Panc1 (cell line): ENCODE measurements at regions of chr5 and their contacts with region 1.

Region 1: DNA sequence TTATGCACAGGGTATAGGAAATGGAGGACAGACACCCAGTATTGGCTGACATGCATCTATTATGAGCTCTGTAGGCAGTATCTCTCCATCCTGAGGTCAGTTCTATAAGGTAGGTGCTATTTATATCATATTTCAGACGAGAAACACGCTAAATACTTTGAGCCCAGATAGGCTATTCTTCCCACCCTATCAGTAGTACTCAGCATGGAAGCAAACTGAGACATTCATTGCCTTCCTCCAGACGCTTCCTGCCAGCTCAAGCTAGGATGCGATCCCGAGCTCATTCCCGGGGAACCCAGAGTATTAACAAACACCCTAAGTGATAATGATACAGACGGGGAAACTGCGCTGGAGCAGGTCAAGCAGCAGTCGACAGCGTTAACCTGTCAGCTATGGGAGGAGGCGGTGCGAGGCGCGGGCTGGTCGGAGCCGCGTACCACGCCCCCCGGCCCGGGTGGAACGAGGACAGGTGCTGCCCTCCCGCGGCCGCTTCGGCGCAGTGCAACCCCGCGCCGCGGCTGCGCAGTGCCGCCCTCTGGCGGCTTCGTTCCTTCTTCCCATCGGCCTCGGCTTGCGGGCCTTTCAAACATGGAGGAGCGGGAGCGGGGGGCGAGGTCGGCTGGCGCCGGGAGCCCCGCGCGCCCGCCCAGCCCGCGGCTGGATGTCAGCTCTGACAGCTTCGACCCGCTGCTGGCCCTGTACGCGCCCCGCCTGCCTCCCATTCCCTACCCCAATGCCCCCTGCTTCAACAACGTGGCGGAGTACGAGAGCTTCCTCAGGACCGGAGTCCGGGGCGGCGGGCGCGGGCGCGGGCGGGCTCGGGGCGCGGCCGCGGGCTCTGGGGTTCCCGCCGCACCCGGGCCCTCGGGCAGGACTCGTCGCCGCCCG is at the start of gene LSM11:
- DNase-seq: peak; percentile 68
- ATAC-seq: peak; percentile 97
- H3K4me3 ChIP-seq: peak within 1 kb of the TSS; percentile 61 to 70
- H3K27ac ChIP-seq: peak within 1 kb of the TSS; percentile 35; the same call in 1 of the 2 replicates
- H3K4me1 ChIP-seq: peaks cover 9% of the 10 kb centered on the region
- H3K27me3 ChIP-seq: no peaks in the 10 kb centered on the region
- CTCF ChIP-seq: peak; percentile 100
- total RNA-seq, gene LSM11: 1.6 TPM

Region 2: DNA sequence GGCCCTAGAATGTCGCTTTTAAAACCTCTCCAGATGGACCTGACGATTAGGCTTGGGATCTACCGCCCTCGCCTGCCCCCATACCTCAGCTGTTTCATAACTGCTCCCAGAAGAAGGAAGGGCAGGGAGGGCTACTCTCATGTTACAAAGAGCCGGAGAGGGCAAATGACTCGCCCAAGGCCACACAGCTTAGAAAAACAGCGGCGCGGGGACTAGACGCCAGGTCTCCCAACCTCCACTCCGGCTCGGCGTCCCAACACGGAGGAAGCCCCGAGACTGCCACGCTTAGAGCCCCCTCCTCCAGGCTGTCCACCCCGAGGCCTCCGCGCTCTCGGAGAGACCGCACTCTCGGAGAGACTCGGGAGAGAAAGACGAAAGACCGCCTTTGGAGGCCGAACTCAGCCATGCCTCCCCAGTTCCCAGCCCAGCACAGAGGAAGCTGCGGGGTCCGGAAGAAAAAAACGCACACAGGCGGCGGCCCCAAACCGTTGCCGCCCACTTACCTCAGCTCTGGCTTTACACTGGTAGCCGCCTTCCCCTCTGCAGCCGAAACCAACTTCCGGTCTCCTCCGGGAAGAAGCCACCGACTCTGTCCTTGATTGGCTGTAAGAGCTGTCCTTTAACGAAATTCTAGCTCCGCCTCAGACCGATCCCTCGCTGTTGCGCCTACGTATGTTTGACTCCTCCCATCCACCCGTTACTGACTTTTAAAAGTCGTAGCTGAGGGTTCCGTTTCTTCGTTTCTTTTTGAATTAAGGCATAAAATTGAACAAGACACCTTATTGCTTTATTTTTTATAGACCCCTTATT is 600.9 kb before region 1 on chr5 and contains the start of gene MED7:
- CTCF ChIA-PET with region 1: no interaction called
- POLR2A ChIA-PET with region 1: no interaction called
- in situ Hi-C with region 1: no loop called
- intact Hi-C with region 1: loop called (anchors 10 kb)
- DNase-seq: peak; percentile 96
- ATAC-seq: peak; percentile 100
- H3K4me3 ChIP-seq: peak within 1 kb of the TSS; percentile 68 to 88
- H3K27ac ChIP-seq: peak within 1 kb of the TSS; percentile 81
- H3K4me1 ChIP-seq: no peaks in the 10 kb centered on the region
- H3K27me3 ChIP-seq: no peaks in the 10 kb centered on the region; the same call in 1 of the 2 replicates
- CTCF ChIP-seq: no peak
- total RNA-seq, gene MED7: 9.9 TPM

Region 3: DNA sequence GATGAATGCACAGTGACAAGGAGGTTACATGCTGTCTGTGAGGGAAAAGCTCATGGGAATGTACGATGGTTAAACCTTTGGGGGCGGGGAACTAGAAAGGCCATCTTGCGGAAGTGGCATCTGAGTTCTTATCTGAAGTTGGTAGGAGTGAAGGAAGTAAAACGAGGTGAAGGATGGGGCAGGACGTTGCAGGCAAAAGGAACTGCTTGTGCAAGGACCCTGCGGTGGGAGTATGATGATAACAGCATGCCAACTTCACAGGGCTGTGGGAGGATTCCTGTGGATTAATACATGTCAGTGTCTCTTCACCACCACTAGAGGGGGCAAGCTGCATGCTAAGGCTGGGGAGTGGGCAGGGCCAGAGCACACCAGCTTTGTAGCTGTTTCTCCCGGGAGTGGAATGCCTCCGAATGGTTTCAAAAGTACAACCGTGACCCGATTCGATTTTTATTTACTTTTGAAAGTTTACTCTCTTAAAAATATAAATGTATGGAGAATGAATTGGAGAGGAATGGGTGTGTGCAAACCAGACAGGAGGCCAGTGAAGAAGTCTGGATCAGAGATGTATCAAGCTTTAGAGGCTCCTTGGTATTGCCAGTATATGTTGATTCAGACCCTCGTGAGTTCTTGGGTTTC is 415.0 kb before region 1 on chr5:
- CTCF ChIA-PET with region 1: no interaction called
- POLR2A ChIA-PET with region 1: no interaction called
- in situ Hi-C with region 1: no loop called
- intact Hi-C with region 1: loop called (anchors 5 kb)
- DNase-seq: peak; percentile 62
- ATAC-seq: peak; percentile 98
- H3K4me3 ChIP-seq: peak overlapping the region; percentile 14 to 62; a peak in 3 of 4 replicates
- H3K27ac ChIP-seq: no peak overlapping the region
- H3K4me1 ChIP-seq: peaks cover 4% of the 10 kb centered on the region; the same call in 1 of the 2 replicates
- H3K27me3 ChIP-seq: no peaks in the 10 kb centered on the region; the same call in 1 of the 2 replicates
- CTCF ChIP-seq: peak; percentile 95

Region 4: DNA sequence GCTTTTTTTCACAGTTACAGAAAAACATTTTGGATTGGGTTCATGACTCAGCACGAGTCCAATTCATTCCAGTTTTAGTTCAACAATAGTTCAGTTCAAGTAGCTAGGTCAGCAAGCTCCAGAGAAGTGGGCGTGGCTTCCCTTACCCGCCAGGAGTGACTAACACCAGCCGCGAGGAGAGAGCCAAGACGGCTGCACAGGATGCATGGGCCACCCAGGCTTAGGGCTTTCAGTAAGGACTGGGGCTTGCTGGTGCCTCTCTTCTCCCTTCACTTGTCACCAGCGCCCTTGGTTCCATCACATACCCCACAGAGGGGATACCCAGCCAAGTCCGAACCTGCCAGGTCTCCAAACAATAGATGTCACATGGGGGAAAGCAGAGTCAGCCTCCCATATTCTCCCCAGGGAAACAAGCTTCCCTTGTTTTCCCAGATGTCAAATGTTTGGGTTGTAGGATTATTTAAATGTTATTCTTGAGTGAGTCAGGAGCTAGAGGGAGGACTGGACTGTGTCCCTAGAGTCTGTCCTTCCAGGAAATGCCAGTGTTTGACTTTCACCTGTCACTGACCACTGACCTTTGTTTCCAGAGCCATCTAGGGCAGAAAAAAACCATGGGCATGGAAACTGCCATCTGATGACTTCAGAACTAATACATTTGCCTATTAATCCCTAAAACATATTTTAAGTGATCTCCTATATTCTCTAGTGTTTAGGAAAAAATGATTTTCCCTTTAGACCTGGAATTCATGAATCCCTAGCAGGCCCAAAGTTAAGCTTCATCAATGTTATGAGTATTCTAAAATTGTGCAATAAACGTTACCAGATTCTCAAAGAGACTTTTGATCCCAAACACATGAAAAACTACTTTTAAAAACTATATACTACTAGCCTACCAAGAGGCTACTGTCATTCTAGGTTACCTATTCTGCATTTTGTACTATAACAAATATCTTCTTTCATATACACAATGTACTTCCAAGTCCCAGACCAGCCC is 231.5 kb before region 1 on chr5:
- CTCF ChIA-PET with region 1: interaction called, 10 read pairs
- POLR2A ChIA-PET with region 1: no interaction called
- in situ Hi-C with region 1: no loop called
- intact Hi-C with region 1: no loop called
- DNase-seq: peak; percentile 78
- ATAC-seq: peak; percentile 88
- H3K4me3 ChIP-seq: no peak overlapping the region
- H3K27ac ChIP-seq: no peak overlapping the region
- H3K4me1 ChIP-seq: no peaks in the 10 kb centered on the region; the same call in 1 of the 2 replicates
- H3K27me3 ChIP-seq: no peaks in the 10 kb centered on the region
- CTCF ChIP-seq: no peak

Region 5: GRCh38 chr5:157665467-157666100 is 77.8 kb before region 1 on chr5:
- CTCF ChIA-PET with region 1: interaction called, 8 read pairs
- POLR2A ChIA-PET with region 1: no interaction called
- in situ Hi-C with region 1: no loop called
- intact Hi-C with region 1: loop called (anchors 1 kb)
- DNase-seq: no peak
- ATAC-seq: no peak
- H3K4me3 ChIP-seq: no peak overlapping the region
- H3K27ac ChIP-seq: no peak overlapping the region
- H3K4me1 ChIP-seq: no peaks in the 10 kb centered on the region
- H3K27me3 ChIP-seq: peaks cover 6% of the 10 kb centered on the region
- CTCF ChIP-seq: no peak